Upper lobe of right lung (tissue), 1 donor: ENCODE measurements at regions of chr6 and their contacts with region 1.

Region 1: DNA sequence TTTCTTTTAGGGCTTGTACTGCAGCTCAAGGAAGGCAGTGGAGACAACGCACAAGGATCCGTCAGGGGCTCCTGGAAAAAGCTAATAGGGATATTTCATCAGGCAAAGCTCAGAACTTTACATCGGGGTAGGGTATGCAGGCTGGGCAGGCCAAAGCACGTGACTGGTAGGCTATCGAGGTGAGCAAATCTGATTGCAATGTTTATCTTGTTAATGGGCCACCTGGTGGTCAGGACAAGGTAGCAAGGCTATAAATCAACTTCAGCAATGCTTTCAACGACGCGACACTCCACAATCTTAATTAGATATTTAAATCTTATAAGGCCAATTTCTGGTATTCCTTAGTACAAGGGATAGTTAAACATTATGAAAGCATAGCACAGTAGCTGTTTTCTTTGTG is 1302.8 kb upstream of the EYS start:
- DNase-seq: no peak
- ATAC-seq: no peak
- H3K4me3 ChIP-seq: no peak overlapping the region
- H3K27ac ChIP-seq: no peak overlapping the region
- H3K4me1 ChIP-seq: no peaks in the 10 kb centered on the region
- H3K27me3 ChIP-seq: no peaks in the 10 kb centered on the region
- CTCF ChIP-seq: no peak

Region 2: DNA sequence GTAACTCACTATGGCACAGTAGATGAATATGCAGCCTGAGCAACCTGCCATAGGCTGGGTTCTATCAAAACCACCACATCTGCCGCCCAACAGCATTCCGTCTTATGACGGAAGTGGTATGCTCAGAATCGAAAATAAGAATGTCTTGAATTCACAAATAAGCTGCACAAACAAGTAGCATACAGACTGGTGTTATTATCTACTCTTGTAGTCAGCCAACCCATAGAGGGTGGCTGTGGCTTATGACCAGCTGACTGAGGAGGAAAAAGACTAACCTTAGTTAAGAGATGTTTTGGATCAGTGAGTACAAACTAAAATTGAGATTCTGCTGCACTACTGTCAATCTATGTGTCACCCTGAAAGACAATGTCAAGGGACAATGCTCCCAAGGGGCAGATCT is 47.7 kb before region 1 on chr6:
- intact Hi-C with region 1: loop called (anchors 2 kb)
- DNase-seq: no peak
- ATAC-seq: no peak
- H3K4me3 ChIP-seq: no peak overlapping the region
- H3K27ac ChIP-seq: no peak overlapping the region
- H3K4me1 ChIP-seq: no peaks in the 10 kb centered on the region
- H3K27me3 ChIP-seq: no peaks in the 10 kb centered on the region
- CTCF ChIP-seq: no peak